Activated B cell treated with CpG ODN at 0.5 μM for 24 hours (primary cell): ENCODE measurements at regions of chr6 and their contacts with region 1.

Region 1: GRCh38 chr6:35327349-35328027 is 14.9 kb upstream of the PPARD start:
- DNase-seq: peak; percentile 49
- ATAC-seq: peak; percentile 94
- H3K4me3 Mint-ChIP-seq: no peak overlapping the region
- H3K27ac Mint-ChIP-seq: peak overlapping the region; percentile 80
- H3K4me1 Mint-ChIP-seq: peaks cover 15% of the 10 kb centered on the region
- H3K27me3 Mint-ChIP-seq: no peaks in the 10 kb centered on the region
- CTCF ChIP-seq: peak; percentile 19

Region 2: DNA sequence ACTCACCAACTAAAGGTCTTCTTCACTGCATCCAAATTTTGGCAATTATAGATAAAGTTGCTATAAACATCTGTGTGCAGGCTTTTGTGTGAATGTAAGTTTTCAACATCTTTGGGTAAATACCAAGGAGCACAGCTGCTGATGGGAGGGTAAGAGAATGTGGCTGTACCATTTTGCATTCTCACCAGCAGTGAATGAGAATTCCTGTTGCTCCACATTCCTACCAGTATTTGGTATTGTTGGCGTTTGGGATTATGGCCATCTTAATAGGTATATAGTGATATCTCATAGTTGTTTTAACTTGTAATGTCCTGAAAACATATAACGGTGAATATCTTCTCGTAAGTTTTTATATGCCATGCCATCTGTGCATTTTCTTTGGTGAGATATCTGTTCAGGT is 700.2 kb before region 1 on chr6:
- CTCF ChIA-PET with region 1: no interaction called
- POLR2A ChIA-PET with region 1: no interaction called
- intact Hi-C with region 1: no loop called
- DNase-seq: no peak
- ATAC-seq: no peak
- H3K4me3 Mint-ChIP-seq: no peak overlapping the region
- H3K27ac Mint-ChIP-seq: no peak overlapping the region
- H3K4me1 Mint-ChIP-seq: peaks cover 14% of the 10 kb centered on the region
- H3K27me3 Mint-ChIP-seq: no peaks in the 10 kb centered on the region
- CTCF ChIP-seq: no peak

Region 3: DNA sequence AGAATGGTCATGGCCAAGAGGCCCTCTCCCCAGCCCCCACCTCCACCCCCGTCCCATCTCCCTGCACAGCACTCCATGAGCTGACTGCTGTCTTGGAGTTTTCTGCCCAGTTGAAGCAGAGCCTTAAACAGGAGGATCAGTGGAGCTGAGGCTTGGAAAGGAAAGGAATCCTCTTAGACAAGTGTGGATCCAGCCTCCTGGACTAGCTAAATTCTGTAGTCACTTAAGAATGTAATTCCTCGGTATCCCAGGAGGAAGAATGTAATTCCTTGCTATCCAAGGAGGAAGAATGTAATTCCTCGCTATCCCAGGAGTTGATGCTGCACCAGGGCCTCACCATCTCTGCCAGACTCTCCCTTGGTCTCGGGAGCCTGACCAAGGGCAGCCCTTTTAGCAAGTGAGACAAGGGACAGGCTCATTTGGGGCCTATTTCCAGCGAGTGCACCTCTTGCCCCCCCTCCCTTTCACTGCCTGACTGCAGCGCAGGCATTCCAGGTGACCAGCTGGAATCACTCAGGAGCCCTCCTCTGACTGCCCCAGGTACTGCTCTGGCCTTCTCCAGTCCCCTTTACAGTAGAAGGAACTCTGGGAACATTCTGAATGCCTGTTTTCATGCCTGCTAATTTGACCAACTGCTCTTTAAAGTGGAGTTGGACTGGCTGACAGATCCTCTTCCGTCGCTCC is 262.6 kb before region 1 on chr6:
- CTCF ChIA-PET with region 1: no interaction called
- POLR2A ChIA-PET with region 1: no interaction called
- intact Hi-C with region 1: no loop called
- DNase-seq: no peak
- ATAC-seq: no peak
- H3K4me3 Mint-ChIP-seq: no peak overlapping the region
- H3K27ac Mint-ChIP-seq: no peak overlapping the region
- H3K4me1 Mint-ChIP-seq: no peaks in the 10 kb centered on the region
- H3K27me3 Mint-ChIP-seq: no peaks in the 10 kb centered on the region
- CTCF ChIP-seq: no peak

Region 4: DNA sequence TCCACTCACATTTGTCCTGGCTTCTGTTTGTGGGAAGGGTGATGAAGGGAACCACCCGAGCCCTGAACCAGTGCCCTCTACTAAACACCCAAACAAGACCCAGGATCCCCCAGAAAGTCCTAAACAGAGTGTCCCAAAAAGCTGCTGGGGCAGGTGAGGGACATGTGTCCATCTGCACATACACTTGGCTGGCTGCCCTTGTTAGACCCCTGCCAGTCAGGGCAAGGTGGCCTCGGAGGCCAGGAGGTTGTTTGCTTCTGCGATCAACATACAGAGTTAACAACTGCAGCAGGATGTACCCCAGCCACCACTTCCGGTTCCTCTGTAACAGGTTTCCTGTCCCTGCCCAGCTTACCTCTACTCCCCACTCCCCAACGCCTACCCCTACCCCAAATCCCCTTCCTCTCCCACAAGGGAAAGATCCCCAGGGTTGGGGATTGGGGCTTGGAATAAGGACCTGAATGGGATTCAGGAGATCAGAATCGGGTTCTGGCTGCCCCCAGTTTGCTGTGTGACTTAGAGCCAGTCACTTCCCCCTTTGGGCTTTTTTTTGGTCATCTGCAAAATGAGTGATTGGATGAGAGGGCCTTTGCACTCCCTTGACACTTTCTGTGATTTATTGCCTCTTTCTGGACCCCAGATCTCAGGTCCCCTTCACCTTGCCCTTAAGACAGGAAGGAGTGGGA is 16.0 kb before region 1 on chr6:
- CTCF ChIA-PET with region 1: interaction called, 7 read pairs
- POLR2A ChIA-PET with region 1: interaction called, 14 read pairs
- intact Hi-C with region 1: loop called (anchors 2 kb)
- DNase-seq: no peak
- ATAC-seq: peak; percentile 67
- H3K4me3 Mint-ChIP-seq: peak overlapping the region; percentile 76
- H3K27ac Mint-ChIP-seq: peak overlapping the region; percentile 96
- H3K4me1 Mint-ChIP-seq: peaks cover 68% of the 10 kb centered on the region
- H3K27me3 Mint-ChIP-seq: no peaks in the 10 kb centered on the region
- CTCF ChIP-seq: no peak

Region 5: DNA sequence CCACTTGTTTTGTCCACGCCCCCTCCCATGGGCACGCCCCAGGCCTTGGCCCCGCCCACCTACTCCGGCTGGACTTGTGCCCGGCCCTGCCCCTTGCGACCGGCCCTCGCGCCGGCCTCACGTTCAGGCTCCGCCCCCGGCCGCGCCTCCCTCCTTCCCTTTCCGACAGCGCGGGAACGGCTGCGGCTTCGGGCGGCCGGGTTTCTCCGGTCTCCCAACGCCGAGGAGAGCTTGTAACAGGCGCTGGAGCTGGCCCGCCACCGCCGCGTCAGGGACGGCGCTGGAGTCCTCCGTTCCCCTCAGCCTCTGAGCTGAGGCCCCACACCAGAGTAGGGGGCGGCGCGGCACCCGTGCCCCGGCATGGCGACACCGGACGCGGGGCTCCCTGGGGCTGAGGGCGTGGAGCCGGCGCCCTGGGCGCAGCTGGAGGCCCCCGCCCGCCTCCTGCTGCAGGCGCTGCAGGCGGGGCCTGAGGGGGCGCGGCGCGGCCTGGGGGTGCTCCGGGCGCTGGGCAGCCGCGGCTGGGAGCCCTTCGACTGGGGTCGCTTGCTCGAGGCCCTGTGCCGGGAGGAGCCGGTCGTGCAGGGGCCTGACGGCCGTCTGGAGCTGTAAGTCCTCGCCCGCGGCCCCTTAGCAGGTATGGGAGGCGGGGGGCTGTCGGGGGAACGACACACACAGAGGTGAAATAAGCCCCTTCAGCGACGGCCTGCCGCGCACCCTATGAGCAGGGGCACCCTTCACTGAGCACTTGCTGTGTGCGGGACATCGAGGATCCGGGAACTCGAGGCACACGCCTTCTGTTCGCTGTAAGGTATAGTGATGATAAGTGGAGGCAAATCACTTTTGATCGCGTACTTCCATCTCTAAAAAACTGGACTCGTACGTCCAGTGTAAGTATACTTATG is 125.0 kb after region 1 on chr6 and contains the start of gene FANCE:
- CTCF ChIA-PET with region 1: interaction called, 11 read pairs
- POLR2A ChIA-PET with region 1: interaction called, 3 read pairs
- intact Hi-C with region 1: loop called (anchors 1 kb)
- DNase-seq: peak; percentile 97
- ATAC-seq: peak; percentile 90
- H3K4me3 Mint-ChIP-seq: peak within 1 kb of the TSS; percentile 86
- H3K27ac Mint-ChIP-seq: peak within 1 kb of the TSS; percentile 5
- H3K4me1 Mint-ChIP-seq: peaks cover 27% of the 10 kb centered on the region
- H3K27me3 Mint-ChIP-seq: no peaks in the 10 kb centered on the region
- CTCF ChIP-seq: no peak
- total RNA-seq, gene FANCE: 8.5 and 9.2 TPM in 2 replicates